Activated CD4-positive, alpha-beta memory T cell treated with anti-CD3 and anti-CD28 coated beads for 36 hours (primary cell): ENCODE measurements at regions of chr4 and their contacts with region 1.

Region 1: GRCh38 chr4:38310446-38311043 is 350.3 kb downstream of the PTTG2 start:
- DNase-seq: peak; percentile 86
- H3K4me3 Mint-ChIP-seq: peak overlapping the region; percentile 12
- H3K27ac Mint-ChIP-seq: peak overlapping the region; percentile 72
- H3K4me1 Mint-ChIP-seq: peaks cover 68% of the 10 kb centered on the region
- H3K27me3 Mint-ChIP-seq: peaks cover 15% of the 10 kb centered on the region

Region 2: DNA sequence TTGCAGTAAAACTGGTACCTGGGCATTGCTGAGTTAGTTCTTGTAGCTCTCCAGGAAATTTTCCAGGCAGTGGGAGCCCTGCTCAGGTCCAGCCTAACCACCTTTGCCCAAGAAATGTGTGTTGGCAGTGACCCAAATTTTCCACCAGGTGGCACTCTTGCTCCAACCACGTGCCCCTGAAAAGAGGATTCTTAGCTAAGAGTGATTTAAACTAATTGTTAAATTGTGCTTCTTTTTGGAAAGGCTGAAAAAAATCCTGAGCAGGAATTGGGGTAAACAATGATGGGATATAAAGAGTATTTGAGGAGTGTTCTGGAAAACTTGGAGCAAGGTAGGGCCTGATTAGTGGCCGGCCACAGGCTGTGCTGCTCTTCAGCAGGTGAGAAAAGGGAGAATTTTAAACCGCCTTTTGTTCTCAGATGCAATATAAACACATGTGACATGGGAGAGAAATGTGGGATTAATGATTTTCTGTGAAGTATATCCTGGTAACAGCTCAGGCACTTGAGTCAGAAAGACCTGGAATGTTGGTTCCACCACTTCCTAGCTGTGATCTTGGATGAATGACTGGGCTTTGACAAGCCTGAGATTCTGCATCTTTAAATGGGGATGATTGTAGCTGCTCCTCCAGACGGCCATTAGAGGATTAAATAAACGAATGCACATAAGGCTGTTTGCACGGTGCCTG is 130.7 kb before region 1 on chr4:
- CTCF ChIA-PET with region 1: interaction called, 7 read pairs
- POLR2A ChIA-PET with region 1: interaction called, 3 read pairs
- intact Hi-C with region 1: loop called (anchors 2 kb)
- DNase-seq: peak; percentile 83
- H3K4me3 Mint-ChIP-seq: no peak overlapping the region
- H3K27ac Mint-ChIP-seq: peak overlapping the region; percentile 14
- H3K4me1 Mint-ChIP-seq: peaks cover 39% of the 10 kb centered on the region
- H3K27me3 Mint-ChIP-seq: no peaks in the 10 kb centered on the region

Region 3: DNA sequence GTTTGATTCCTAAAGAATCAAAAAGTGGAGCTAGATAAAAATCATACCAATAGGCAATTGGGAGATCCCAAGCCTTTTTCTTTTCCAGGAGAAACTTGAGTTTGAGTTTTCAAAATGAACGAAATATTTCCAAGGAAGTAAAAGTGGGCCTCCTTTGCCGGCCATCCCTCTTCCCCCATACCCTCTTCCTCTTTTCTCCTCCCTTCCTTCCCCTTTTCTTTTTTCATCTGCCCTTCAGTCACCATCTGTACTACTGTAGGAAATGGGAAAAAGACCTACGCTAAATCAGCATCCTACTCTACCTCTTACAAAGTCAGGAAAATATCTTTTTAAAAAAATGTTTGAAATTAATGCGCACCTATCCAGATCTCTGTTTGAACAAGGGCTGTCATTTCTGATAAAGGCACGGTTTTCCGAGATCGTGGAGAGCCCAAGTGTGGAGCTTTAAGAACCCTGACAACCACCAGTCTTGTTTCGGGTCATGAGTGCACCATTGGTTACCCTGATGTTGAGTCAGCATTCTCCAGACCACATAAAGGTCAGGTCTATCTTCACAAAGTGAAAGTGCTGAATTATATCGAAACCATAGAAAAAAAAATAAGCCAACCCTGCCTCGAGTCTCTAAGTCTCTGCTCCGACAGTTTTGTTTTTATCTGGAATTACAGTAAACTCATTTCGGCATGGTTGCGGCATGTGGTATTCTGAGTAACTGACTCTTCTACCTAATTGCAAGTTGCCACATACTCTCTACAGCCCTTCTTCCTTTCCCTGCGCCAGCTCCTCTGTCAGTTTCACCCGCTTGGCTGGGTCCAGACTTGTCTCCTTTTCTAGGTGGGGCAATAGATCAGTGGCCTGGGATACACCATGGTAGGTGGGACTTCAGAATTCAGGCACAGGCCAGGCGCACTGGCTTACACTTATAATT is 213.2 kb after region 1 on chr4:
- CTCF ChIA-PET with region 1: interaction called, 11 read pairs
- POLR2A ChIA-PET with region 1: interaction called, 8 read pairs
- intact Hi-C with region 1: loop called (anchors 1 kb)
- DNase-seq: peak; percentile 87
- H3K4me3 Mint-ChIP-seq: peak overlapping the region; percentile 54
- H3K27ac Mint-ChIP-seq: peak overlapping the region; percentile 68
- H3K4me1 Mint-ChIP-seq: peaks cover 30% of the 10 kb centered on the region
- H3K27me3 Mint-ChIP-seq: peaks cover 20% of the 10 kb centered on the region

Region 4: GRCh38 chr4:38663801-38664705 is 353.5 kb after region 1 on chr4 and contains the start of gene KLF3:
- CTCF ChIA-PET with region 1: interaction called, 3 read pairs
- POLR2A ChIA-PET with region 1: interaction called, 4 read pairs
- intact Hi-C with region 1: loop called (anchors 1 kb)
- DNase-seq: peak; percentile 86
- H3K4me3 Mint-ChIP-seq: peak within 1 kb of the TSS; percentile 83
- H3K27ac Mint-ChIP-seq: peak within 1 kb of the TSS; percentile 68
- H3K4me1 Mint-ChIP-seq: peaks cover 61% of the 10 kb centered on the region
- H3K27me3 Mint-ChIP-seq: no peaks in the 10 kb centered on the region
- total RNA-seq, gene KLF3: 9.1 to 9.9 TPM

Region 5: GRCh38 chr4:38804654-38805295 is 494.2 kb after region 1 on chr4 and contains the start of gene TLR1:
- CTCF ChIA-PET with region 1: no interaction called
- POLR2A ChIA-PET with region 1: no interaction called
- intact Hi-C with region 1: loop called (anchors 1 kb)
- DNase-seq: peak; percentile 24
- H3K4me3 Mint-ChIP-seq: peak within 1 kb of the TSS; percentile 76
- H3K27ac Mint-ChIP-seq: peak within 1 kb of the TSS; percentile 91
- H3K4me1 Mint-ChIP-seq: peaks cover 35% of the 10 kb centered on the region
- H3K27me3 Mint-ChIP-seq: no peaks in the 10 kb centered on the region
- total RNA-seq, gene TLR1: 1.5 to 1.8 TPM